ENCODE measurements at regions of chr10 and their contacts with region 1.

Region 1: GRCh38 chr10:128165536-128165935 is 39.3 kb upstream of the MKI67 start:
- DNase-seq: no peak
- H3K4me3 Mint-ChIP-seq: no peak overlapping the region
- H3K27ac Mint-ChIP-seq: no peak overlapping the region
- H3K4me1 Mint-ChIP-seq: no peaks in the 10 kb centered on the region
- H3K27me3 Mint-ChIP-seq: peaks cover 30% of the 10 kb centered on the region
- CTCF ChIP-seq: no peak

Region 2: GRCh38 chr10:127790225-127790624 is 375.3 kb before region 1 on chr10:
- CTCF ChIA-PET with region 1: no interaction called
- POLR2A ChIA-PET with region 1: no interaction called
- intact Hi-C with region 1: no loop called
- DNase-seq: no peak
- H3K4me3 Mint-ChIP-seq: no peak overlapping the region
- H3K27ac Mint-ChIP-seq: no peak overlapping the region
- H3K4me1 Mint-ChIP-seq: no peaks in the 10 kb centered on the region
- H3K27me3 Mint-ChIP-seq: peaks cover 49% of the 10 kb centered on the region
- CTCF ChIP-seq: no peak

Region 3: GRCh38 chr10:128178319-128178958 is 12.9 kb after region 1 on chr10:
- CTCF ChIA-PET with region 1: interaction called, 11 read pairs
- POLR2A ChIA-PET with region 1: no interaction called
- intact Hi-C with region 1: no loop called
- DNase-seq: peak; percentile 55
- H3K4me3 Mint-ChIP-seq: no peak overlapping the region
- H3K27ac Mint-ChIP-seq: no peak overlapping the region
- H3K4me1 Mint-ChIP-seq: peaks cover 4% of the 10 kb centered on the region
- H3K27me3 Mint-ChIP-seq: peaks cover 36% of the 10 kb centered on the region
- CTCF ChIP-seq: peak; percentile 48

Region 4: GRCh38 chr10:128324077-128324827 is 158.7 kb after region 1 on chr10:
- CTCF ChIA-PET with region 1: no interaction called
- POLR2A ChIA-PET with region 1: no interaction called
- intact Hi-C with region 1: no loop called
- DNase-seq: peak; percentile 7
- H3K4me3 Mint-ChIP-seq: no peak overlapping the region
- H3K27ac Mint-ChIP-seq: no peak overlapping the region
- H3K4me1 Mint-ChIP-seq: no peaks in the 10 kb centered on the region
- H3K27me3 Mint-ChIP-seq: peaks cover 26% of the 10 kb centered on the region
- CTCF ChIP-seq: no peak